ENCODE measurements at regions of chrX and their contacts with region 1.

Region 1: GRCh38 chrX:149470955-149471354 is 34.2 kb downstream of the IDS start:
- DNase-seq: peak; percentile 88
- ATAC-seq: peak; percentile 97

Region 2: DNA sequence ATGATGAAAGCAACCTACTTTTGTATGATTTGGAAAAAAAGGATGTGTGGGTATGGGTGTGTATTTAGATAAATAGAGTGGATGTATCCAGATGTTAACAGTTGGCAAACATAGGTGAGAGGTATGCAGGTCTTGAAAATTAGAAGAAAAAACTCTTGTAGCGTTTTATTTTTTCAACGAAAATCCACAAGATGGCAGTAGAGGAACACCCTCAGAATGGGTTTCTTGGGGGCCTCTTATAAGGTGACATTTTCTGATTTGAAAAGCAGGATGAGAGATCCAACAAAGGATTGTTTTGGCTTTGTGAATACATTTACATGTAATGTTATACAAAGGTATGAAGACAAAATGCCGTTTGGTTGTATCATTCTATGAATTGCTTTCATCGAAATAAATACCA is 1421.5 kb before region 1 on chrX:
- intact Hi-C with region 1: loop called (anchors 5 kb)
- DNase-seq: no peak
- ATAC-seq: no peak

Region 3: GRCh38 chrX:149313871-149314371 is 157.0 kb before region 1 on chrX:
- intact Hi-C with region 1: no loop called
- DNase-seq: no peak
- ATAC-seq: no peak

Measured in Right ventricle myocardium inferior (tissue), 1 donor.